ENCODE measurements at regions of chr9 and their contacts with region 1.

Region 1: GRCh38 chr9:126704873-126705766 is 91.4 kb downstream of the LMX1B start:
- DNase-seq: peak; percentile 64 to 91 (median 83)

Region 2: GRCh38 chr9:126587187-126588185 is 117.6 kb before region 1 on chr9:
- intact Hi-C with region 1: no loop called
- DNase-seq: peak; percentile 61 to 94 (median 80)

Region 3: DNA sequence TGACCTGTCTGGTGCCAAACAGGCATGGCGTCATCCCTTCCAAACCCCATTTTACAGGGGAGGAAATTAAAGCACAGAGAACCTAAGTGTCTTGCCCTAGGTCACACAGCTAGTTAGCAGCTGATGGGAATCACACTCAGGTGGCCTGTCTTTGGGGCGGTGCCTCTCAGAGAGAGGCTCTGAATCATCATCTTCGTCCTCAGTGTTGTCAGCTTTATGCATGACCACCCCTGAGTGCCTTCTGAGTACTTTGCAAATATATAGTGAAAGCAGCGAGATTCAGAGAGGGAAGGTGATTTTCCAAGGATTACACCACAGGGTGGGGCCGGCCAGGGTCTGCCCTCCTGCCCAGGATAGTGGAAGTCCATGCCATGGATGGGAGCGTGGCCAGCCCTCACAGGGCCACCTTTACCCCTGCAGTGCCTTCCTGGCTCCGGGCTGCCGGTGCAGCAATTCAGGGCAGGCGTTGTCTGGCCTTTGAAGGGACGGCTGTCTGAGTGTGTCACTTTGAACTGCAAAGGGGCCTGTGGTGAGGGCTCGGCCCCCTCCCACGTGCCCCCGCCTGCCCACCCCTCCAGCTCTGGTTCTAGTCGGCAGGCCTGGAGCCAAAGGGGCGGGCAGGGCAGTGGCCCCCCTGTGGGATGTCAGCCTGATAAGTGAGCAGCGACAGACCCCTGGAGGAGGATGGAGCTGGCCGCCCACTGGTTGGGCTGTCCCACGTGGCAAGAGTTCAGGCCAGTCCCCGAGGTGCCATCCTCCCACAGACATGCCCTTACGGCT is 74.5 kb before region 1 on chr9:
- intact Hi-C with region 1: no loop called
- DNase-seq: no peak

Region 4: GRCh38 chr9:126661521-126662220 is 43.4 kb before region 1 on chr9:
- intact Hi-C with region 1: no loop called
- DNase-seq: no peak

Region 5: GRCh38 chr9:126722252-126723078 is 17.3 kb after region 1 on chr9:
- intact Hi-C with region 1: loop called (anchors 2 kb)
- DNase-seq: peak in 41 of 42 donors; percentile 53 to 92 (median 78)